Activated naive CD4-positive, alpha-beta T cell treated with anti-CD3 and anti-CD28 coated beads, Interleukin-2, amount 10 ng/mL, durations not matched to agents 7 days and 5 days (primary cell): ENCODE measurements at regions of chr6 and their contacts with region 1.

Region 1: DNA sequence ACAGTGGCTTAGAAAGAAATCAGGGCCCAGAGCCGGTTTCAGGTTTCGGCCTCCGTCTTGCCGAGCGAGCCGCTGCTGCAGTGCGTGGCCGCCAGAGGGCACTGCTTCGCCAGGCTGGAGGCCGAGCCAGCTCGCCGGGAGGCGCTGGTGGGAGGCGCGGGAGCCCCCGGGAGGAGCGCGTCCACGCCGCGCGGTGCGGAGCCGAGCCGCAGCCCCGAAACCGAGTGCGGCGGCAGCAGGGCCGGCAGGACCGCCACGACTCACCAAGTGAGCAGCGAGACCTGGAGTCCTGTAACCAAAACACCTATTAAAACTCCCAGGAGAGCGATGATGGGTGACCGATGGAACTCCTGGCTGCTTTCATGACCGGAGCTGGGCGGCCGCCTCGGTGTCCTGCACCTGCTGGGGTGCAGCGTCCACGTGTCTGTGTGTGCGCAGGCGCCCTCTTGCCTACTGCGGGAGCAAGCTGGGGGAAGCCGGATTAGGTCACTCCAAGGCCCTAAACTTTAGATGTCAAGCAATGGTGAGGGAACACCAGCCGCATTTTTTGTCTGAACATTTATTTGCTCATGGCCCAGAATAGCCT is 186.9 kb upstream of the UST start:
- DNase-seq: peak; percentile 71
- H3K4me3 Mint-ChIP-seq: no peak overlapping the region
- H3K27ac Mint-ChIP-seq: no peak overlapping the region
- H3K4me1 Mint-ChIP-seq: peaks cover 8% of the 10 kb centered on the region
- H3K27me3 Mint-ChIP-seq: peaks cover 36% of the 10 kb centered on the region

Region 2: GRCh38 chr6:148578245-148578732 is 18.3 kb after region 1 on chr6:
- CTCF ChIA-PET with region 1: interaction called, 15 read pairs
- DNase-seq: peak; percentile 53
- H3K4me3 Mint-ChIP-seq: no peak overlapping the region
- H3K27ac Mint-ChIP-seq: no peak overlapping the region
- H3K4me1 Mint-ChIP-seq: no peaks in the 10 kb centered on the region
- H3K27me3 Mint-ChIP-seq: peaks cover 12% of the 10 kb centered on the region